K562 (cell line): ENCODE measurements at regions of chr11 and their contacts with region 1.

Region 1: GRCh38 chr11:36564376-36565030 is 3.3 kb upstream of the RAG1 start:
- DNase-seq: peak; percentile 18 to 61 (median 25)
- ATAC-seq: peak; percentile 84
- H3K4me3 ChIP-seq: no peak overlapping the region
- H3K27ac ChIP-seq: no peak overlapping the region
- H3K4me1 ChIP-seq: peaks cover 3 to 7% of the 10 kb centered on the region in 2 experiments; a peak in 3 of 5 replicates
- H3K27me3 ChIP-seq: no peaks in the 10 kb centered on the region
- CTCF ChIP-seq: peak; percentile 66 to 77 (median 68); a peak in 5 of 6 replicates
- EP300 ChIP-seq: no peak
- POLR2A ChIP-seq: no peak
- RAD21 ChIP-seq: peak; percentile 85 to 94

Region 2: GRCh38 chr11:36326524-36327419 is 237.7 kb before region 1 on chr11:
- CTCF ChIA-PET with region 1: no interaction called
- POLR2A ChIA-PET with region 1: no interaction called
- in situ Hi-C with region 1: no loop called
- intact Hi-C with region 1: no loop called
- DNase-seq: no peak
- ATAC-seq: no peak
- H3K4me3 ChIP-seq: no peak overlapping the region
- H3K27ac ChIP-seq: no peak overlapping the region
- H3K4me1 ChIP-seq: no peaks in the 10 kb centered on the region
- H3K27me3 ChIP-seq: no peaks in the 10 kb centered on the region; a peak in 1 of 5 replicates
- CTCF ChIP-seq: no peak
- EP300 ChIP-seq: no peak
- POLR2A ChIP-seq: no peak
- RAD21 ChIP-seq: no peak

Region 3: DNA sequence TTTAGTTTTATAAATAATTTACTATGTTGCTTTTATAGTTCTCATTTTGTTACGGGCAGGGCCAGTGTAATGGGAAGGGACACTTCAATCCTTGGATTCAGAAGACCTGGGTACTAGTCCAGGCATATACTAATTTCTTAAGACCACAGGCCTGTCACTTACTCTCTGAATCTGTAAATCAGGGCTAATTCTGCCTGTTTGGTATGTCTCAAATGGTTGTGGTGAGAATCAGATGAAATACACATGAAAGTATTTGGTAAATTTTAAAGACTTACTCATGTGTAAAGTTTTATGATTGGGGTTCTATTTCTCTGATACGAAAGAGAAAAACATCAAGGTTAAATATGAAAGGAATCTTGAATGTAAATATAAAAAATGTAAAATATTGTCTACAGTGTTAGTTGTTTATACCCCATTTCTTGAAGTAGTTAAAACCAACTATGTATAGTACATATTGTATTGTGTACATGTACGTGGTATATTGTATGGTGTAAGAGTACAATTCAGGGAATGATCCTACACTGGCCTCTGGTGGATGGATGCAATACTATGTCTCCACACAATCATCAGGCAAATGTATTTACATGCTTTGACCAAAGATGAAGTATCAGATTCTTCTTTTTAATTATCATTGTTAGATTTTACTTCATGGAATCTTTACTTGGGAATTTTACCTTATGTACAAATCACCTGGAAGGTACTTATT is 58.1 kb after region 1 on chr11:
- CTCF ChIA-PET with region 1: interaction called, 60 read pairs
- POLR2A ChIA-PET with region 1: interaction called, 4 read pairs
- in situ Hi-C with region 1: no loop called
- intact Hi-C with region 1: loop called (anchors 1 kb)
- DNase-seq: peak; percentile 7 to 35 (median 16)
- ATAC-seq: peak; percentile 92
- H3K4me3 ChIP-seq: no peak overlapping the region
- H3K27ac ChIP-seq: no peak overlapping the region
- H3K4me1 ChIP-seq: peaks cover 0 to 17% of the 10 kb centered on the region in 2 experiments; a peak in 2 of 5 replicates
- H3K27me3 ChIP-seq: no peaks in the 10 kb centered on the region
- CTCF ChIP-seq: peak; percentile 37 to 88 (median 62); a peak in 5 of 6 replicates
- EP300 ChIP-seq: no peak
- POLR2A ChIP-seq: no peak
- RAD21 ChIP-seq: peak; percentile 94 to 97

Region 4: GRCh38 chr11:36672813-36673450 is 108.4 kb after region 1 on chr11:
- CTCF ChIA-PET with region 1: interaction called, 8 read pairs
- POLR2A ChIA-PET with region 1: no interaction called
- in situ Hi-C with region 1: no loop called
- intact Hi-C with region 1: loop called (anchors 1 kb)
- DNase-seq: peak; percentile 11 to 55 (median 29)
- ATAC-seq: peak; percentile 42; the same call in 1 of the 3 replicates
- H3K4me3 ChIP-seq: no peak overlapping the region
- H3K27ac ChIP-seq: no peak overlapping the region
- H3K4me1 ChIP-seq: no peaks in the 10 kb centered on the region
- H3K27me3 ChIP-seq: no peaks in the 10 kb centered on the region
- CTCF ChIP-seq: peak in 2 of 3 experiments; percentile 50 to 59; a peak in 4 of 6 replicates
- EP300 ChIP-seq: no peak
- POLR2A ChIP-seq: no peak
- RAD21 ChIP-seq: peak; percentile 56 to 71